A673 (cell line): ENCODE measurements at regions of chr12 and their contacts with region 1.

Region 1: DNA sequence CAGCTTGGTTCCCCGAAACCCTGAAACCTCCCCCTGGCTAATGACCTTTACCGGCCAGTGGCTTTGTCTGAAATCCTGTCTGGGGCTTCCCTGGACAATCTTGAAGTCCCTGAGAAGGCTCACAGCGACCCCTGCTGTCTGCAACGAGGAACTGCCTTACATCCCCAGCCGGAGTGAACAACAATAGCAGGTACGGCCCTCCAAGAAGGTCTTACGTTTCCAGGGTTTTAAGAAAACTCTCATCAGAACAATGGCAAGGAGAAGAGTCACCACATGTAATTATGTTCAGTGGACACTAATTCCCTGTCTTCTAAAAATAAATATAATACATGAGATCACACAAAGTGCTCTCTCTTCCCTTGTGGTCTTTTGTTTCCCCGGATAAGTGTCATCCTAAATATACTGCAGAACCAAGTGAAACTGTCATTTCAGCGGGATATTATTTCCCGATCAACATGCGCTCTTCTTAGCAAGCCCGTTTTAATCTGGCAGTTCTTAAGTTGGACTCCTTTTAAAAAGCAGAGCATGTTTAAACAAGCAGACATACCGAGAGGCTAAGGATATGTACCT is 53.3 kb downstream of the RBM19 start:
- DNase-seq: peak; percentile 67
- H3K4me3 ChIP-seq: no peak overlapping the region
- H3K27ac ChIP-seq: no peak overlapping the region
- H3K4me1 ChIP-seq: no peaks in the 10 kb centered on the region
- H3K27me3 ChIP-seq: no peaks in the 10 kb centered on the region
- CTCF ChIP-seq: peak; percentile 96

Region 2: DNA sequence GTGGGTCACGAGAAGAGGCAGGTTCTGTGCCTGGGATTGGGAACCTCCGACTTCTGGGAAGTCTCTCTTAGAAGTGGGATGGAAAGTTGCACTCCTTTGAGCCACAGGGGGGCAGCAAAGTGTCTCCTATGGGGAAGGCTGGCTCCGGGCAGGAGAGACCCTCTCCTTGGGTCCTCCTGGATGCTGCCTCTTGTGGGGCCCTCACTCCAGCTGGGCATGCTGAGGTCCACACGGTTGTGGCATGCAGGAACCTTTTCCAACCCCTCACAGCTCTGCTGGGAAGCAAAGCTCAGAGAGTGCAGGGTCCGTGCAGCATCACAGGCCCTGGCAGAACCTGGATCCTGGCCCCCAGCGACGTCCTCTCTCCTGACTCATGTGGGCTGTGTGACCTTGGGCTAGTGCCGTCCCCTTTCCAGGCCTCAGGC is 473.2 kb before region 1 on chr12:
- CTCF ChIA-PET with region 1: no interaction called
- POLR2A ChIA-PET with region 1: no interaction called
- intact Hi-C with region 1: loop called (anchors 2 kb)
- DNase-seq: peak; percentile 65
- H3K4me3 ChIP-seq: no peak overlapping the region
- H3K27ac ChIP-seq: no peak overlapping the region
- H3K4me1 ChIP-seq: no peaks in the 10 kb centered on the region
- H3K27me3 ChIP-seq: peaks cover 4% of the 10 kb centered on the region
- CTCF ChIP-seq: peak; percentile 78

Region 3: GRCh38 chr12:113462117-113462774 is 450.6 kb before region 1 on chr12:
- CTCF ChIA-PET with region 1: no interaction called
- POLR2A ChIA-PET with region 1: no interaction called
- intact Hi-C with region 1: loop called (anchors 1 kb)
- DNase-seq: peak; percentile 80
- H3K4me3 ChIP-seq: no peak overlapping the region
- H3K27ac ChIP-seq: no peak overlapping the region
- H3K4me1 ChIP-seq: peaks cover 4% of the 10 kb centered on the region
- H3K27me3 ChIP-seq: peaks cover 84% of the 10 kb centered on the region
- CTCF ChIP-seq: peak; percentile 91

Region 4: GRCh38 chr12:114194956-114195355 is 282.1 kb after region 1 on chr12:
- CTCF ChIA-PET with region 1: no interaction called
- POLR2A ChIA-PET with region 1: no interaction called
- intact Hi-C with region 1: no loop called
- DNase-seq: no peak
- H3K4me3 ChIP-seq: no peak overlapping the region
- H3K27ac ChIP-seq: no peak overlapping the region
- H3K4me1 ChIP-seq: no peaks in the 10 kb centered on the region
- H3K27me3 ChIP-seq: no peaks in the 10 kb centered on the region
- CTCF ChIP-seq: no peak